ENCODE measurements at regions of chr1 and their contacts with region 1.

Region 1: DNA sequence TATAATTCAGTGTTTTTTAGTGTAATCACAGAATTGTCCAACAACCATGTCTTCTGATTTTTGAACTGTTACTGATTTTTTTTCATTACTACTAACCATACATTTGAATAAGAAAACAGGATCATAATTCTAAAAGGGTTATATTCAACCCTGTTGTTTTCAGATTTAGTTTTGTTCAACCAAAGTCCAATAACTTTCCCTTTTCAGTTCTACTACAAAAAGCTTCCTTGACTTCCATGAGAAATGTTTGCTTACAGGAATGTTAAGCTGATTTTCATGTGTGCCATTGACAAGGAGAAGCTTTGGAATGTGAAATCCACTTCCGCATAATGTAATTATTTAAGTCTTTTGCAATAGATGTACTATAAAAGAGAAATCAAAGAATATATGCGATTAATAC is 72.0 kb upstream of the ZNF326 start:
- DNase-seq: no peak
- H3K4me3 Mint-ChIP-seq: no peak overlapping the region
- H3K27ac Mint-ChIP-seq: no peak overlapping the region
- H3K4me1 Mint-ChIP-seq: peaks cover 4% of the 10 kb centered on the region
- H3K27me3 Mint-ChIP-seq: no peaks in the 10 kb centered on the region

Region 2: DNA sequence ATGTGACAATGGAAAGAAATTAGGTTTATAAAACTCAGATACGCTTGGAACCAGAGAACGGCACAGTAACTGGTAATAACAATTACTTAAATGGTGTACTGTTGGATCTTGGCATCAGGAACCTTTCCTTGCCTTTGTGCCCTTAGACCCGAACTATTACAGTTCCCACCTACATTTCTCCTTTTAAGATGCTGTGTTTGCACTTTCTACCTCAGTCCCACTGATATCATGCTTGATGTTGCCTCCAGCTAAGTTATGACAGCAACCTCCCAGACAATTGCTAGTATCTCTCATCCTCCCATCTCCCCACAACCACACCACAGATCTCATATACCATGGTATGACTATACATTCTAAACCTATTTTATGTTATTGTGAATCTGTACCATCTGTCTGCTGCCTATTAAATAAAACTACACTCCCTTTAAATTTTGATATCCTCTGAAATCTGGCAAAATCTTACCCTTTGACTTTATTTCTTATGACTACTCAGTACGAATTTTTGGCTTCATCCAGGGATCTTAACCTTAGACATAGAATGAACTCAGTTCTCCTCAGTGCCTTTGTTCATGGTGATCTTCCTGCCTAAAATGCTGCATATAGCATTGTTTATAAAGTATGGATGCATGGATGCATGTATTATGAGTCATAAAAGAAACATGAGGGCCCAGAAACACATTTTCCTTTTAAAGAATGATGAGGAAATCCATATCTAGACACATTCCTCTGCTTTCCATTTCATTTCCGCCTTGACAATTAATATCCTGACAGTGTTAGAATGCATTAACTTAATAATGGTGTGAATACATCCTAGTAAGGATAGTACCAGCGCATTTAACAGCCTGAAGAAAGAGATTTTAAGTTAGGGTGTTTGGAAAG is 38.0 kb before region 1 on chr1:
- intact Hi-C with region 1: loop called (anchors 5 kb)
- DNase-seq: no peak
- H3K4me3 Mint-ChIP-seq: no peak overlapping the region
- H3K27ac Mint-ChIP-seq: no peak overlapping the region
- H3K4me1 Mint-ChIP-seq: peaks cover 17% of the 10 kb centered on the region
- H3K27me3 Mint-ChIP-seq: no peaks in the 10 kb centered on the region

Region 3: DNA sequence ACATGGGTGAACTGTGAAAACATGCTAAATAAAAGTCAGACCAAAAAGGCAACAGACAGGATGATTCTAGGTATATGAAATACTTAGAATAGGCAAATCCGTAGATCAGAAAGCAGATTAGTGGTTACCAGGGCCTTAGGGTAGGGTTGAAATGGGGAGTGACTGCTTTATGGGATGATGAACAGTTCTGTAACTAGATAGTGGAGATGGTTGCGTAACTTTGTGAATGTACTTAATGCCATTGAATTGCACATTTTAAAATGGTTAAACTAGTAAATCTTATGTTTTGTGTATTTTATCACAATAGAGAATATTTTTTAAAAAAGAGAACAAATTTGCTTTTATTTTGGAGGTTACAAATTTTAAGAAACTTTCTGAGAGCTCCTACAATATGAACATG is 89.4 kb after region 1 on chr1:
- intact Hi-C with region 1: no loop called
- DNase-seq: no peak
- H3K4me3 Mint-ChIP-seq: no peak overlapping the region
- H3K27ac Mint-ChIP-seq: no peak overlapping the region
- H3K4me1 Mint-ChIP-seq: peaks cover 9% of the 10 kb centered on the region
- H3K27me3 Mint-ChIP-seq: no peaks in the 10 kb centered on the region